ENCODE measurements at regions of chr4 and their contacts with region 1.

Region 1: DNA sequence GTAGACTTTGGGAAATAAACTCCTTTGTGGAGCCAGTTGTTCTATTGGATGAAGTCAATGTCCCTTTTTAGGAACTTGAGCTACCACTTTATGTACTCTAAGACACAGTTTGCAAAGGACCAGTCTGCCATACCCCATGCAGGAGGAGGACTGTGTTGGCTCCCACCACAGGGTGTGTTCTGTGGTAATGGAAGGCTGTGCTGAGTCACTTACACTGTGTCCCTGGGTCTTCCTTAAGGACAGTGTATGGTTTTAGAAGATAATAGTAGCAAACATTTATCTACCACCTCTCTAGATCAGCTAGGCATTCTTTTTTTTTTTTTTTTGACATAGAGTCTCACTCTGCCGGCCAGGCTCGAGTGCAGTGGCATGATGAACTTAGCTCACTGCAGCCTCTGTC is 184.0 kb upstream of the PGRMC2 start:
- DNase-seq: peak; percentile 47
- ATAC-seq: peak; percentile 82
- H3K4me3 ChIP-seq: no peak overlapping the region
- H3K27ac ChIP-seq: peak overlapping the region; percentile 64
- H3K4me1 ChIP-seq: peaks cover 27% of the 10 kb centered on the region
- H3K27me3 ChIP-seq: no peaks in the 10 kb centered on the region
- CTCF ChIP-seq: no peak

Region 2: GRCh38 chr4:128517739-128518510 is 46.3 kb after region 1 on chr4:
- CTCF ChIA-PET with region 1: no interaction called
- POLR2A ChIA-PET with region 1: no interaction called
- intact Hi-C with region 1: loop called (anchors 5 kb)
- DNase-seq: peak; percentile 87
- ATAC-seq: peak; percentile 99
- H3K4me3 ChIP-seq: no peak overlapping the region
- H3K27ac ChIP-seq: peak overlapping the region; percentile 79
- H3K4me1 ChIP-seq: peaks cover 32% of the 10 kb centered on the region
- H3K27me3 ChIP-seq: no peaks in the 10 kb centered on the region
- CTCF ChIP-seq: no peak